Activated CD4-positive, alpha-beta T cell treated with anti-CD3 and anti-CD28 coated beads for 36 hours (primary cell): ENCODE measurements at regions of chr9 and their contacts with region 1.

Region 1: DNA sequence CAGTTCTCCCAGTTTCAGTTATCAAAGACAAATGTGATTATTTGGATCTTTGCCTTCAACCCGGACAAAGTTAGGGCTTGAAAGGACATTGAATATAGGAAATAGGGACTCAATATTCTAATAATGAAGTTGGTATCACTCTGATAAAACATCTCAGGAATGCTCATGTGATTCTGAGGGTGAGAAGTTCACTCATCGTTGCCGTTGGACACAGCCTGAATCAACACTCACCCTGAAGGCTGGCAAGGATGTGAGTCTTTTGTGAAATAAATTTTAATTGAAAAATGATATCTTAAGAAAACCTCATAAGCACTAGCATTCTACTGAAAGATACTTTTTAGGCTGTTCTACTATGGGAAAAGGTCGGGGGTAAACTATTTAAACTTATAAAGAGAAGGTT is 44.8 kb upstream of the C9orf72 start:
- DNase-seq: no peak
- ATAC-seq: no peak
- H3K4me3 Mint-ChIP-seq: no peak overlapping the region
- H3K27ac Mint-ChIP-seq: no peak overlapping the region
- H3K4me1 Mint-ChIP-seq: no peaks in the 10 kb centered on the region
- H3K27me3 Mint-ChIP-seq: peaks cover 14% of the 10 kb centered on the region

Region 2: GRCh38 chr9:27634879-27635278 is 16.8 kb after region 1 on chr9:
- CTCF ChIA-PET with region 1: no interaction called
- POLR2A ChIA-PET with region 1: no interaction called
- intact Hi-C with region 1: loop called in 1 of 2 experiments (anchors 2 kb)
- DNase-seq: no peak
- ATAC-seq: no peak
- H3K4me3 Mint-ChIP-seq: no peak overlapping the region
- H3K27ac Mint-ChIP-seq: no peak overlapping the region
- H3K4me1 Mint-ChIP-seq: peaks cover 2% of the 10 kb centered on the region
- H3K27me3 Mint-ChIP-seq: peaks cover 6% of the 10 kb centered on the region

Region 3: GRCh38 chr9:27664121-27664779 is 46.2 kb after region 1 on chr9:
- CTCF ChIA-PET with region 1: no interaction called
- POLR2A ChIA-PET with region 1: no interaction called
- intact Hi-C with region 1: loop called in 1 of 2 experiments (anchors 10 kb)
- DNase-seq: peak; percentile 14
- ATAC-seq: no peak
- H3K4me3 Mint-ChIP-seq: no peak overlapping the region
- H3K27ac Mint-ChIP-seq: no peak overlapping the region
- H3K4me1 Mint-ChIP-seq: peaks cover 9% of the 10 kb centered on the region
- H3K27me3 Mint-ChIP-seq: peaks cover 13% of the 10 kb centered on the region